Activated CD4-positive, alpha-beta T cell treated with anti-CD3 and anti-CD28 coated beads, Interleukin-2, amount 10 ng/mL, durations not matched to agents 24 days and 14 days (primary cell): ENCODE measurements at regions of chr4 and their contacts with region 1.

Region 1: DNA sequence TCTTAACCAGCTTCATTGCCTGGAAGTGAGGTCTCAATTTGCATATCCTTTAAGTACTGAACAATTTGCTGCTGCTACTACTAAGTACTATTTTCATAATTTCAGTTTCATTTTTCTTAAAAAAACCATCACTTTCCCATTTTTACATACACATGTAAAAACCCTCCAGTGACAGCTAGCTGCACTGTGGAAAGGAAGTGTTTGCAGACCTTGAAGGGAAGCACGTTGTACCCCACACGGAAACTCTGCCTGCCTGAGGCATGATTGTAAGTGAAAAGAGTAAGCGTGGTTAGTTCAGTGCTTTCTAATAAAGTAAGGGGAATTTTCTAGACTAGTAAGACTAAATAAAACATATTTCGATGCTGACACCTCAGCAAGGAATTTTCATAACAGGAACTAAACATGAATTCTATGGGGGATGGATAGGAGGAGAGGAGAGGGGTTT is 103.6 kb downstream of the RAPGEF2 start:
- DNase-seq: peak; percentile 84
- H3K4me3 Mint-ChIP-seq: peak overlapping the region; percentile 70
- H3K27ac Mint-ChIP-seq: peak overlapping the region; percentile 71
- H3K4me1 Mint-ChIP-seq: peaks cover 45% of the 10 kb centered on the region
- H3K27me3 Mint-ChIP-seq: no peaks in the 10 kb centered on the region

Region 2: GRCh38 chr4:158253350-158253980 is 953.0 kb before region 1 on chr4:
- intact Hi-C with region 1: loop called (anchors 10 kb)
- DNase-seq: peak; percentile 86
- H3K4me3 Mint-ChIP-seq: no peak overlapping the region
- H3K27ac Mint-ChIP-seq: no peak overlapping the region
- H3K4me1 Mint-ChIP-seq: no peaks in the 10 kb centered on the region
- H3K27me3 Mint-ChIP-seq: peaks cover 2% of the 10 kb centered on the region

Region 3: DNA sequence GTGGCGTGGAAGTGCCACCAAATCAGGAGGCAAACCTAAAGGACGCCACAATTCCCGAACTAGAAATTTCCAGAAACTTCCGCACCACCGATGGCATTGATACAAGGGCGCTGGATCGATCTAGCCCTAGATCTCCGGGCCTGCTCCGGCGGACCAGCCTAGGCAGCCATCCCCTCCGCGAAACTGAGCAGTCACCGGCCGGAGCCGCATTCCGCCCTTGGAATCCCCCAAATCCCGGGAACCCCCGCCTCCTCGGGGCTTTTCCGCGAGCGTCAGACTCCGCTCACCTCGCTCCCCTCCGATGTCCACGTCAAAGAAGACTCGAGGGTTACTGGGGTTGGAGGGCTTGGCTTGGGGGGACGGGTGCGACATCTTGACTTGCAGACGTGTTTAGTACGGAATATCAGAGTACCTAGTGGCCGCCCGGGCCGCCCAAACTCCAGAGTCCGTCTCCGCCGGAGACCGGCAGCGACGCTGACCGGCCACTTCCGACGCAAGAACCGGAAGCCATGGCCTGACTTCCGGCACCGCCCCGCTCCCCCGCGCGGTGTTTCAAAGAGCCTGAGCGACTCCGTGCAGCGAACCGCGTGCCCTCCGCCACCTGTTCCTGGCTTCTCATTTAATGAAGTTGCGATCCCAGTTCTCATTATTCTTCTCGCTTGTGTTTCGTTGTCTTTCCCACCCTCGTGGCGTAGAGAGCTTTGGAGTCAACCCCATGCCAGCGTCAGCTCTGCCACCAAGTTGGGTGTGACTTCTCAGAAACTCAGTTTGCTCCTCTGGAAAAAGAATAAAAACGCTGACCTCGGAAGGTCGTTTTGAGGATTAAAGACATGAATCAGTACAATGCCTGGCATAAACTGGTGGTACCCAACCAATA is 483.3 kb before region 1 on chr4 and contains the start of gene PPID:
- intact Hi-C with region 1: loop called (anchors 1 kb)
- DNase-seq: peak; percentile 96
- H3K4me3 Mint-ChIP-seq: peak within 1 kb of the TSS; percentile 95
- H3K27ac Mint-ChIP-seq: peak within 1 kb of the TSS; percentile 99
- H3K4me1 Mint-ChIP-seq: peaks cover 45% of the 10 kb centered on the region
- H3K27me3 Mint-ChIP-seq: no peaks in the 10 kb centered on the region
- total RNA-seq, gene PPID: 62.9 and 64.7 TPM in 2 replicates

Region 4: DNA sequence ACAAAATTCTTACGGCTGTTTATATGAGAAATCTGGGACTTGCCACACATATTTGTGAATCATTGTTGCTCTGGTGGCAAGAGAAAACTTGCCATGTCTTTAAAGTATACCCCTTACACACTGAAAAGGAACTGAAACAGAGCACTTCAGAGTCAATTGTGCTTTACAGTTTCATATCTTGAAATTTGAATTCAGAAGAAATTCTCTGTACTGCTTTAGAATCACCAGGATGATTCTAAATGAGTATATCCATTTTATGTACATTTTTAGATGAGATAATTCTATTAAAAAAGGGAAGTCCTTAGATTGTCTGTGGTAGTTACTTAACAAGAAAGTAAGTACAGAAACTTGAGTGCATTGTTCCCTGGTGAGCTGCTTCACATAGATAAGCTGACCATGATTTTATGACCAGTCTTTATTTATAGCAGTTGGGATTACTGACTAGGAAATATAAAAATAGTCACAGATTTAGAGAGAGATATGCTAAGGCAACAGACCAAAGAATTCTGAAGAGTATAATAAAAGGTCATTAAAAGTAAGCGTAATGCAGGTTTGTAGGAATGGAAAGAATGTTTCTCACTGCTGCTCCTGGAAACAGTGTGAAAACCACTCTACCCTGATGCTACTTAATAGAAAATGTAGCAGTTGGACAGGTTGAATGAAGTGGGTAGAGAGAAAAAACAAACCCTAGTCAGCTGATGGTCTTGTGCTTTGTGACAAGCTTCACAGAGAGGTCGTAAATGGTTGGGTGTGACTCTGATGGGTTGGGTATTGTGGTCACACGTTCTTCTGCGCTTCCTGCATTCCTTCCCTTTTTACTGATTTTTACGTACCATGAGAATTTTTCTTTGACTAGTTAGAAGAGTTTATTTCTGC is 396.6 kb before region 1 on chr4:
- intact Hi-C with region 1: loop called (anchors 1 kb)
- DNase-seq: peak; percentile 70
- H3K4me3 Mint-ChIP-seq: peak overlapping the region; percentile 70
- H3K27ac Mint-ChIP-seq: peak overlapping the region; percentile 87
- H3K4me1 Mint-ChIP-seq: peaks cover 53% of the 10 kb centered on the region
- H3K27me3 Mint-ChIP-seq: no peaks in the 10 kb centered on the region

Region 5: DNA sequence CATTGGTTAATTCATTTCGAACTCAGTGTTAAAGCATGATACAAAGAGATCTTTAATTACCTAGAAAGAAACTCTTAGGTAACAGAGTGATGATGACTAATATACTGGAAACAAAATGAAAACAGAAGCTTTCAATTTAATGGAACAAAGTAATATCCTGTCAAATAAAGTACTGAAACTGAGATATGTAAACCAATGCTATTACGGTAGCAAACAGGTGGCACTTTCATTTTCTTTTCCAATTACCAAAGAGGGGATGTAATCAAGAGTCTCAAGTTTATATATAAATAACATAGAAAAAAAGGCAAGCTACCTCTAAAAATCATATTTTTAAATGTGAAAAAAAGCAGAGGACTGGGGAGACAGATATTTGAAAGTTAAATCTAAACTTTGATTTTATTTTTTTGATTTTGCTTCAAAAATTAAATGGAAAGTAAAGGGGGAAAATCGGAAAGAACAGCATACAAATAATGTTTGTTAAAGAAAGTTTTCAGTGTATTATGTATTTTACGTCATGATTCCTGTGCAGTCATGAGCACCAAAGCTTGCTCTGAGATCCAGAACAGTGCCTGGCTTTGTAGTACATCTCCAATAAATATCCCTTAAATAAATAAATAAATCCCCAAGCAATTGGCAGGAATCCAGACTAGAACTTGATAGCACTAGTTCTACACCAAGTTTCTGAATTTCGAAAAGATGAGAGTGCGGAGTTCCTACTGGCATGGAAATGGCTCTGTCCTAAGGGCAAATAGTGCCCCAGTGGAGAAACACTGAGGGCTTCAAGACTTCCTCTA is 128.6 kb before region 1 on chr4:
- intact Hi-C with region 1: loop called (anchors 1 kb)
- DNase-seq: no peak
- H3K4me3 Mint-ChIP-seq: peak overlapping the region; percentile 16
- H3K27ac Mint-ChIP-seq: peak overlapping the region; percentile 6
- H3K4me1 Mint-ChIP-seq: peaks cover 10% of the 10 kb centered on the region
- H3K27me3 Mint-ChIP-seq: no peaks in the 10 kb centered on the region

Region 6: DNA sequence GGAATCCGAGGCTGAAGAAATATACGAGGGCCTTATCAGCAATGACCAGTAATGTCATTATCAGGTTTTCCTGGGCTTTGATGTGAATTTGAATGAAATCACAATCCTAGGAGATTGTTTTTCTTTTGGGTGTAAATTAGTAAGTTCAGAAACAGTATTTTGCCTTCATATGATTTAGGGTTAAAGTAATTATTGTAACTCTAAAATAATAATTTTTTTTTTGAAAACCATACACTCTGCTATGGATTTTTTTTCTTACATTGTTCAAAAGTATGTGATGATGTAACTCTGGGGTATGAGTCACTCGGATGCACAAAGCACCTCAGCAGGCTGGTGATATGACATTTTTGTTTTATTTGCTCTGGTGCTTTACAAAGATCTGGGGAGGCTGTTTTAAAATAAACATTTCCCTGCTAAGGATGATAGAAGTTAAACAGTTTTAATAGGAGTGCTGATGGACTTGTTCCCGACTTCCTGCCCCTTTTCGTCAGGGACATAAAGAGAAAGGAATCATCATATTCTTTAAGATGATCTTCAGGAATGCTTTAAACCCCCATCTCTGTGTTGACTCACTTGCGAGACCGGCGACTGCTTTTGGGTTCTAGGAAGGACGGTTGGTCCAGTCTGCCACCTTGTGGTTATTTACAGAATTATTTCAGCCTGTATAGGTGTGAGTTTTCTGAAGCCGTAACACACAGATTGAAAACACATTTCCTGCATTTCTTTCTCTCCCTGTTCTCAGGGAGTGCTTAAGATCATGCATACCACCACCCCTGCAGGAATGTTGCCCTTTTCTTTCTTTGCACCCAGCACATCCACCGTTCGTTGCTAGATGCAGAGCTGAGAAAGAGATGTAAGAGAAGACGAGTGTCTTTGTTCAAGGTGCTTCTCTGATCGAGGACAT is 31.1 kb before region 1 on chr4:
- intact Hi-C with region 1: loop called (anchors 2 kb)
- DNase-seq: peak; percentile 87
- H3K4me3 Mint-ChIP-seq: peak overlapping the region; percentile 3
- H3K27ac Mint-ChIP-seq: no peak overlapping the region
- H3K4me1 Mint-ChIP-seq: peaks cover 48% of the 10 kb centered on the region
- H3K27me3 Mint-ChIP-seq: no peaks in the 10 kb centered on the region

Region 7: DNA sequence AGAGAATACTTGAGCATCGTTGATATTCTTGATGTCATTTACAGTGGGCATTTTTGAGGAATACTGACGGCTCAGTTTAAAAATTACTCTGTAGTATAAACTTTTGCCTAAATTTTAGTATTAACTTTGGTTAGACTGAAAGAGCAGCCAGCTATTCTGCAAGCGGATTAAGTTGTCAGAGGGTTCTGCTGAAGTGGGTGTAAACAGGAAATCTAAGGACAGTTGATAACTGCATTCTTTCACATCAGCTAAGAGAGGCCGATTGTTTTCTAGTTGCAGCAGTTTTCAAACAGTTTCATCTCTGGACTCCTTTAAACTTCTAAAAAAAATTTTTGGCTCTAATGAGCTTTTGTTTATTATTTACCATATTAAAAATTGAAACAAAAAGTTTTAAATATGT is 46.0 kb after region 1 on chr4:
- intact Hi-C with region 1: no loop called
- DNase-seq: no peak
- H3K4me3 Mint-ChIP-seq: no peak overlapping the region
- H3K27ac Mint-ChIP-seq: no peak overlapping the region
- H3K4me1 Mint-ChIP-seq: peaks cover 7% of the 10 kb centered on the region
- H3K27me3 Mint-ChIP-seq: no peaks in the 10 kb centered on the region

Region 8: GRCh38 chr4:160423879-160424451 is 1217.5 kb after region 1 on chr4:
- intact Hi-C with region 1: no loop called
- DNase-seq: no peak
- H3K4me3 Mint-ChIP-seq: no peak overlapping the region
- H3K27ac Mint-ChIP-seq: no peak overlapping the region
- H3K4me1 Mint-ChIP-seq: no peaks in the 10 kb centered on the region
- H3K27me3 Mint-ChIP-seq: no peaks in the 10 kb centered on the region